OCI-LY7 (cell line): ENCODE measurements at regions of chr3 and their contacts with region 1.

Region 1: GRCh38 chr3:124467980-124468902 is 262.0 kb upstream of the UMPS start:
- DNase-seq: peak; percentile 48
- H3K4me3 ChIP-seq: no peak overlapping the region
- H3K27ac ChIP-seq: no peak overlapping the region
- H3K4me1 ChIP-seq: no peaks in the 10 kb centered on the region
- CTCF ChIP-seq: peak; percentile 98

Region 2: DNA sequence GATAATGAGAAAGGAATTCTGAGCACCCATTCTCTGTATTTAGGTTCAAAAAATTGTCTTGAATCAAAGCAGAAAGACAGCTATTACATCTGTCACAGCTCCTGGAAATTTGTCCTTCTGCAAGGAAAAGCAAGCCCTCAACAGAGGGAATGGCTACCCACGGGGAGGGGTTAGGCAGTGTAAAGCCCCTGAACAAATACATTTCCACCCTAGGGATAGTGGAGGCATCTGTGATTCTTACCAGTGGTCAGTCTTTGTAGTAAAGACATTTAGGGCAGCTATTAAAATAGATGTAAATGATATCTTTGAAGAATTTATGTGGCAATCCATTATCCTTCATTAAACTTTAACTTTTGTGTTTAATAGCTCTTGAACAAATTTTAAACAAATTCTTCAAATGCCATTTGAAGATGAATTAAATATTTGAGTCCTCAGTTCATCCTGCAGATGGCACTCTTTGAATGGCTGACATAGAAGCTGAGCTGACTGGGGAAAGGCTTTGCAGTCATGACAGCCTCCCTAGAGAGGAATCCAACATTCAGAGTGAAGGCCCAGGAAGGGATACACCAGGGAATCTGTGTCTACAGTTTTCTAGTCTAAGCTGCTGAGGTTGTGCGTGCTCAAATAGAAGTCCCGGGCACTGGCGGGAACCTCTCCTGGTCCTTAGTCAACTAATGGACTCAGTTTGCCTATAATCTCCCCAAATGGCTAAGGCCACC is 116.7 kb before region 1 on chr3:
- CTCF ChIA-PET with region 1: no interaction called
- POLR2A ChIA-PET with region 1: no interaction called
- intact Hi-C with region 1: loop called (anchors 2 kb)
- DNase-seq: peak; percentile 8
- H3K4me3 ChIP-seq: no peak overlapping the region
- H3K27ac ChIP-seq: no peak overlapping the region
- H3K4me1 ChIP-seq: no peaks in the 10 kb centered on the region
- CTCF ChIP-seq: peak; percentile 76

Region 3: GRCh38 chr3:124373524-124373923 is 94.7 kb before region 1 on chr3:
- CTCF ChIA-PET with region 1: no interaction called
- POLR2A ChIA-PET with region 1: interaction called, 10 read pairs
- intact Hi-C with region 1: no loop called
- DNase-seq: no peak
- H3K4me3 ChIP-seq: no peak overlapping the region
- H3K27ac ChIP-seq: no peak overlapping the region
- H3K4me1 ChIP-seq: peaks cover 6% of the 10 kb centered on the region
- CTCF ChIP-seq: no peak